Activated CD4-positive, alpha-beta memory T cell treated with anti-CD3 and anti-CD28 coated beads, Interleukin-2, amount 10 ng/mL, durations not matched to agents 7 days and 5 days (primary cell): ENCODE measurements at regions of chr3 and their contacts with region 1.

Region 1: GRCh38 chr3:129224984-129225393 is 24.4 kb upstream of the COPG1 start:
- DNase-seq: peak; percentile 42
- H3K4me3 Mint-ChIP-seq: no peak overlapping the region
- H3K27ac Mint-ChIP-seq: peak overlapping the region; percentile 73
- H3K4me1 Mint-ChIP-seq: peaks cover 50% of the 10 kb centered on the region
- H3K27me3 Mint-ChIP-seq: no peaks in the 10 kb centered on the region

Region 2: DNA sequence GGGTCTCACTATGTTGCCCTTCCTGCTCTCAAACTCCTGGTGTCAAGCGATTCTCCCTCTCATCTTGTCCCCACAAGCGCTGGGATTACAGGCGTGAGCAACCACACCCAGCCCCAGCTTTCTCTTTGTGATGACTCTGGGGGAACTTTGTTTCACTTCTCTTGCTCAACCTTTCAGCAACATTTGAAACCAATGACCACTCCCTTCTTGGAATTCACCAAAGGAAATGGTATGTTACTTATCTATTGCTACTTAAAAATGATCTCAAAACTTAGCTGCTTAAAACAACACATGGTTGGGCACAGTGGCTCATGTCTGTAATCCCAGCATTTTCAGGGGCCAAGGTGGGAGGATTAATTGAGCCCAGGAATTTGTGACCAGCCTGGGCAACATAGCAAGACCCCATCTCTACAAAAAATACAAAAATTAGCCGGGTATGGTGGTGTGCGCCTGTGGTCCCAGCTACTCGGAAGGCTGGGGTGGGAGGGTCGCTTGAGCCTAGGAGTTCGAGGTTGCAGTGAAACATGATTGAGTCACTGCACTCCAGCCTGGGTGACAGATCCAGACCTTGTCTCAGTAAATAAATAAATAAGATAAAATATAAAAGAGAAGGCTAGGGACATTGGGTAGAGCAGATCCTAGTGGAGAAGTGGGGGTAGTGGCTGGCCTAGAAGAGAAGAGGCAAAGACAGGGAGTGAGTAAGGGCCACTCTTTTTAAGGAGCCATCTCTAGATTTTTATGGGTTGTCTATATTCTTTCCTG is 14.1 kb after region 1 on chr3:
- CTCF ChIA-PET with region 1: interaction called, 25 read pairs
- POLR2A ChIA-PET with region 1: interaction called, 97 read pairs
- DNase-seq: peak; percentile 64
- H3K4me3 Mint-ChIP-seq: peak overlapping the region; percentile 59
- H3K27ac Mint-ChIP-seq: peak overlapping the region; percentile 97
- H3K4me1 Mint-ChIP-seq: peaks cover 59% of the 10 kb centered on the region
- H3K27me3 Mint-ChIP-seq: no peaks in the 10 kb centered on the region

Region 3: GRCh38 chr3:129257609-129258008 is 32.6 kb after region 1 on chr3:
- CTCF ChIA-PET with region 1: no interaction called
- POLR2A ChIA-PET with region 1: no interaction called
- DNase-seq: no peak
- H3K4me3 Mint-ChIP-seq: no peak overlapping the region
- H3K27ac Mint-ChIP-seq: no peak overlapping the region
- H3K4me1 Mint-ChIP-seq: peaks cover 11% of the 10 kb centered on the region
- H3K27me3 Mint-ChIP-seq: no peaks in the 10 kb centered on the region